ENCODE measurements at regions of chr18 and their contacts with region 1.

Region 1: GRCh38 chr18:5294457-5295230 is 882 bp downstream of the ZBTB14 start:
- DNase-seq: peak; percentile 34 to 90 (median 70)
- ATAC-seq: peak; percentile 2
- H3K4me3 ChIP-seq: peak overlapping the region; percentile 69 to 73
- H3K27ac ChIP-seq: peak overlapping the region; percentile 97 to 98
- H3K4me1 ChIP-seq: peaks cover 3 to 16% of the 10 kb centered on the region in 2 donors
- H3K27me3 ChIP-seq: no peaks in the 10 kb centered on the region
- CTCF ChIP-seq: no peak

Region 2: GRCh38 chr18:5237723-5238370 is 56.8 kb before region 1 on chr18:
- intact Hi-C with region 1: loop called in 1 of 2 experiments (anchors 5 kb)
- DNase-seq: peak; percentile 86 to 98 (median 94)
- ATAC-seq: peak; percentile 99
- H3K4me3 ChIP-seq: peak overlapping the region; percentile 63 to 88
- H3K27ac ChIP-seq: peak overlapping the region; percentile 97 to 99
- H3K4me1 ChIP-seq: peaks cover 14 to 31% of the 10 kb centered on the region in 2 donors
- H3K27me3 ChIP-seq: no peaks in the 10 kb centered on the region
- CTCF ChIP-seq: peak in 1 of 2 donors; percentile 13

Region 3: GRCh38 chr18:5417342-5417741 is 122.7 kb after region 1 on chr18:
- intact Hi-C with region 1: no loop called
- DNase-seq: peak; percentile 53 to 79 (median 57)
- ATAC-seq: peak; percentile 86
- H3K4me3 ChIP-seq: no peak overlapping the region
- H3K27ac ChIP-seq: no peak overlapping the region
- H3K4me1 ChIP-seq: peaks cover 0 to 10% of the 10 kb centered on the region in 2 donors
- H3K27me3 ChIP-seq: no peaks in the 10 kb centered on the region
- CTCF ChIP-seq: no peak